Activated CD8-positive, alpha-beta memory T cell treated with anti-CD3 and anti-CD28 coated beads, Interleukin-2, amount 10 ng/mL, durations not matched to agents 7 days and 5 days (primary cell): ENCODE measurements at regions of chr1 and their contacts with region 1.

Region 1: DNA sequence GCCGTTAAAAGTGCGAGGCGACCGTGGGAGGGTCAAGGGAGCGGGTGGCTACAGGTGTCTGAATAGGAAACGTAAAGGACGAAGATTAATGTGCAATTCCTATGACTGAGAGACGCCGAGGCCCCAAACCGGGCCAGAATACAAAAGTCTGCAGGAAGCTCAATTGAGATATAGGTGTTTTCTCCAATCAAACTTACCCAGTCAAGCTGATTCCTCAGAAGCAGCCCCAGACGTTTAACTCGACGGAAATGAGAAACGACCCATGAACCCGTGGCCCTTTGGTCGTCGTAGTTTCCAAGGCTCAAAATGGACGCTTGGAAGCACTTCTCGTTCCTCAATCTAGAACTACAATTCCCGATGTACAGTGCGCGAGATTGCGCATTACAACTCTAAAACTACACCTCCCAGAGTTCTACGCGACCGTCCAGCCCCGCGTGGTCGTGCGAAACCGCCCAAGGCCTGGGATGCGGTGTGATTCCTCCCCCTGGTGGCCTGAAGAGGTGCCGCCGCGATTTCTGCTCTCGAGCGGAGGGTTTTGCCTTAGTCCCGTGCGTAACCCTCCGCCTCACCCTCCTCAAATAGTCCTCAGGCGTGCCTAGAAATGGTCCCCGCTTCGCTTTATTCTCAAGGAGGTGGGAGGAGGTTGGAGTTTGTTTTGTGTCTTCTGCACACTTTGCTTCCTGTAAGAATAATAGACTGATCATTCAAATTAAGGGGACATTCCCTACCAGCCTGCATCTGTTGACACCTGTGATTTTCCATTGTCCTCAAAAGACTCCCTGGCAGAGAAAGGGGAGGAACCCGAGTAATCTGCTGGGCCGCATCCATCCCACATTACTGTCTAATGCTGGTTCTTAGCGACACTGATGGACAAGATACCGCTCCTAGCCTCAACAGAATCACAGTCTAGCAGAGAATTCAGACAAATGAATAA is at the start of gene PAFAH2:
- DNase-seq: peak; percentile 99
- ATAC-seq: peak; percentile 97
- H3K4me3 Mint-ChIP-seq: peak within 1 kb of the TSS; percentile 95
- H3K27ac Mint-ChIP-seq: peak within 1 kb of the TSS; percentile 98
- H3K4me1 Mint-ChIP-seq: peaks cover 24% of the 10 kb centered on the region
- H3K27me3 Mint-ChIP-seq: peaks cover 4% of the 10 kb centered on the region
- total RNA-seq, gene PAFAH2: 9.0 to 9.2 TPM

Region 2: GRCh38 chr1:25819576-25820246 is 178.4 kb before region 1 on chr1 and contains the start of gene MTFR1L:
- CTCF ChIA-PET with region 1: interaction called, 10 read pairs
- DNase-seq: peak; percentile 96
- ATAC-seq: peak; percentile 88
- H3K4me3 Mint-ChIP-seq: peak within 1 kb of the TSS; percentile 91
- H3K27ac Mint-ChIP-seq: peak within 1 kb of the TSS; percentile 92
- H3K4me1 Mint-ChIP-seq: peaks cover 23% of the 10 kb centered on the region
- H3K27me3 Mint-ChIP-seq: no peaks in the 10 kb centered on the region
- total RNA-seq, gene MTFR1L: 28.9 to 31.2 TPM

Region 3: GRCh38 chr1:25922056-25922969 is 75.8 kb before region 1 on chr1:
- CTCF ChIA-PET with region 1: interaction called, 15 read pairs
- DNase-seq: peak; percentile 69
- ATAC-seq: peak; percentile 91
- H3K4me3 Mint-ChIP-seq: peak overlapping the region; percentile 74
- H3K27ac Mint-ChIP-seq: peak overlapping the region; percentile 29
- H3K4me1 Mint-ChIP-seq: peaks cover 25% of the 10 kb centered on the region
- H3K27me3 Mint-ChIP-seq: peaks cover 40% of the 10 kb centered on the region

Region 4: GRCh38 chr1:25971066-25971810 is 26.9 kb before region 1 on chr1:
- CTCF ChIA-PET with region 1: interaction called, 10 read pairs
- DNase-seq: no peak
- ATAC-seq: peak; percentile 80
- H3K4me3 Mint-ChIP-seq: no peak overlapping the region
- H3K27ac Mint-ChIP-seq: peak overlapping the region; percentile 78
- H3K4me1 Mint-ChIP-seq: peaks cover 13% of the 10 kb centered on the region
- H3K27me3 Mint-ChIP-seq: no peaks in the 10 kb centered on the region

Region 5: DNA sequence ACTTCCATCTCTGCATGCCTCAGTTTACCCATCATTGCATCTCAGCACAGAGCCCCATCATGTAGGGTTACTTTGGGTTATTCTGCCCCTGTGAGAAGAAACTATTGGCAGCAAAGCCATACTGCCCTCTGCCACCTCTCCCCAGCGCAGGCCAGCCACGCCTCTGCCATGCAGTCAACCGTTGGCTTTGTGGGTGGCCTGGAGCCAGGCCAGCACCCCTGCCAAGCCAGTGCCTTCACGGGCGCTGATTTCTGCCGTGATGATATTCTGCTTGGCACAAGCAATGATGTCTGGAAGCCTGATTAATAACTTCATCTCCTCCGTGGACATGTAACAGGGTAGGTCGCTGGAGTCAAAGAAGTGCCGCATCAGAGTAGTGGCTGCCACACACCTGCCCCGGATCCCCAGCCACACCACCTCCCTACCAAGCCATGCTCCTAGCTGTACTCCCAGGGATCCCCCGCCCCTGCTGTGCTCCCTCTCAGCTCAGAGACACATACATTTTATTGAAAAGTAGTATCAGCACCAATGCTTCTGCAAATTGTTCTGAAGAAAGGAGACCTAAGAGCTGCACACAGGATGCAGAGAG is 220.9 kb after region 1 on chr1:
- CTCF ChIA-PET with region 1: no interaction called
- DNase-seq: no peak
- ATAC-seq: no peak
- H3K4me3 Mint-ChIP-seq: no peak overlapping the region
- H3K27ac Mint-ChIP-seq: no peak overlapping the region
- H3K4me1 Mint-ChIP-seq: no peaks in the 10 kb centered on the region
- H3K27me3 Mint-ChIP-seq: peaks cover 11% of the 10 kb centered on the region